Naive thymus-derived CD4-positive, alpha-beta T cell (primary cell): ENCODE measurements at regions of chr21 and their contacts with region 1.

Region 1: GRCh38 chr21:31142600-31142999 is 104.3 kb upstream of the KRTAP19-8 start:
- DNase-seq: peak in 7 of 9 donors; percentile 34 to 64 (median 52)
- ATAC-seq: peak; percentile 90
- H3K4me3 ChIP-seq: no peak overlapping the region
- H3K4me3 Mint-ChIP-seq: peak overlapping the region in 1 of 10 donors; percentile 16
- H3K27ac ChIP-seq: no peak overlapping the region
- H3K27ac Mint-ChIP-seq: peak overlapping the region in 2 of 9 donors; percentile 28 to 41
- H3K4me1 ChIP-seq: peaks cover 0 to 20% of the 10 kb centered on the region in 2 donors
- H3K4me1 Mint-ChIP-seq: peaks cover 8 to 70% (median 50%) of the 10 kb centered on the region in 7 donors
- H3K27me3 ChIP-seq: no peaks in the 10 kb centered on the region
- H3K27me3 Mint-ChIP-seq: no peaks in the 10 kb centered on the region

Region 2: GRCh38 chr21:30831194-30831765 is 311.3 kb before region 1 on chr21:
- CTCF ChIA-PET with region 1: interaction called, 11 read pairs
- POLR2A ChIA-PET with region 1: no interaction called
- intact Hi-C with region 1: no loop called
- DNase-seq: peak in 5 of 9 donors; percentile 13 to 32 (median 32)
- ATAC-seq: no peak
- H3K4me3 ChIP-seq: no peak overlapping the region
- H3K4me3 Mint-ChIP-seq: no peak overlapping the region
- H3K27ac ChIP-seq: no peak overlapping the region
- H3K27ac Mint-ChIP-seq: no peak overlapping the region
- H3K4me1 ChIP-seq: no peaks in the 10 kb centered on the region
- H3K4me1 Mint-ChIP-seq: no peaks in the 10 kb centered on the region
- H3K27me3 ChIP-seq: no peaks in the 10 kb centered on the region
- H3K27me3 Mint-ChIP-seq: peaks cover 3 to 26% (median 10%) of the 10 kb centered on the region in 5 donors

Region 3: DNA sequence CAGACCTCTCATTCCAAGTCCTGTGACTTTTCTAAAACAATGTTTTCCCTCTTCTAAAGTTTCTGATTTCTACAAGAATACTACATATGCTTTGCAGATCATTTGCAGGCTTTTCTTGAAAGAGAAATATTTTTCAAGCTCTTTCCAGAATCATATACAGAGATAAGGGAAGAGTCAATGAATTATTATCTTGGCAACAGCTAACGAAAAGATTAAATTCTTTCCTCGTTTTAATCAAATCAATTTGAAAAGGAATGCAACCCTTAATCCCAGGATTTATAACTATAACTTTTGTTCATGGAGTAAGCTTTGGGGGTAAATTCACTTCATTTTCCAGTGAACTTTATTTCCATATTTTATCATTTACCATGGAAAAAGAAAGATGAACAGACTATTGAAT is 268.1 kb before region 1 on chr21:
- CTCF ChIA-PET with region 1: no interaction called
- POLR2A ChIA-PET with region 1: no interaction called
- intact Hi-C with region 1: no loop called
- DNase-seq: no peak
- ATAC-seq: no peak
- H3K4me3 ChIP-seq: no peak overlapping the region
- H3K4me3 Mint-ChIP-seq: no peak overlapping the region
- H3K27ac ChIP-seq: no peak overlapping the region
- H3K27ac Mint-ChIP-seq: no peak overlapping the region
- H3K4me1 ChIP-seq: no peaks in the 10 kb centered on the region
- H3K4me1 Mint-ChIP-seq: no peaks in the 10 kb centered on the region
- H3K27me3 ChIP-seq: peaks cover 0 to 4% of the 10 kb centered on the region in 2 donors
- H3K27me3 Mint-ChIP-seq: peaks cover 0 to 31% (median 15%) of the 10 kb centered on the region in 5 donors

Region 4: DNA sequence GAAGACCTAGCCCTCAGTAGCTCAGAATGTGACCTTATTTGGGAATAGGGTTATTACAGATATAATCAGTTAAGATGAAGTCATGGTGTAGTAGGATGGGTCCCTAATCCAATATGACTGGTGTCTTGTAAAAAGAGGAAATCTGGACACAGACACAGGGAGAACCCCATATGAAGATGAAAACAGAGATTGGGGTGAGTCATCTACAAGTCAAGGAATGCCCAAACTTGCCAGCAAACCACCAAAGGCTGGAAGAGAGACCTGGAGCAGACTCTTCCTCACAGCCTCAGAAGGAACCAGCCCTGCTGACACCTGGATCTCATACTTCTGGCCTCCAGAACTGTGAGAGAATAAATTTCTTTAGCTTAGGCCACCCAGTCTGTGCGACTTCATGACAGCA is 134.3 kb before region 1 on chr21:
- CTCF ChIA-PET with region 1: no interaction called
- POLR2A ChIA-PET with region 1: no interaction called
- intact Hi-C with region 1: no loop called
- DNase-seq: no peak
- ATAC-seq: no peak
- H3K4me3 ChIP-seq: no peak overlapping the region
- H3K4me3 Mint-ChIP-seq: no peak overlapping the region
- H3K27ac ChIP-seq: no peak overlapping the region
- H3K27ac Mint-ChIP-seq: no peak overlapping the region
- H3K4me1 ChIP-seq: peaks cover 6 to 24% of the 10 kb centered on the region in 2 donors
- H3K4me1 Mint-ChIP-seq: peaks cover 8 to 28% (median 20%) of the 10 kb centered on the region in 7 donors
- H3K27me3 ChIP-seq: no peaks in the 10 kb centered on the region
- H3K27me3 Mint-ChIP-seq: peaks cover 0 to 29% (median 9%) of the 10 kb centered on the region in 5 donors

Region 5: DNA sequence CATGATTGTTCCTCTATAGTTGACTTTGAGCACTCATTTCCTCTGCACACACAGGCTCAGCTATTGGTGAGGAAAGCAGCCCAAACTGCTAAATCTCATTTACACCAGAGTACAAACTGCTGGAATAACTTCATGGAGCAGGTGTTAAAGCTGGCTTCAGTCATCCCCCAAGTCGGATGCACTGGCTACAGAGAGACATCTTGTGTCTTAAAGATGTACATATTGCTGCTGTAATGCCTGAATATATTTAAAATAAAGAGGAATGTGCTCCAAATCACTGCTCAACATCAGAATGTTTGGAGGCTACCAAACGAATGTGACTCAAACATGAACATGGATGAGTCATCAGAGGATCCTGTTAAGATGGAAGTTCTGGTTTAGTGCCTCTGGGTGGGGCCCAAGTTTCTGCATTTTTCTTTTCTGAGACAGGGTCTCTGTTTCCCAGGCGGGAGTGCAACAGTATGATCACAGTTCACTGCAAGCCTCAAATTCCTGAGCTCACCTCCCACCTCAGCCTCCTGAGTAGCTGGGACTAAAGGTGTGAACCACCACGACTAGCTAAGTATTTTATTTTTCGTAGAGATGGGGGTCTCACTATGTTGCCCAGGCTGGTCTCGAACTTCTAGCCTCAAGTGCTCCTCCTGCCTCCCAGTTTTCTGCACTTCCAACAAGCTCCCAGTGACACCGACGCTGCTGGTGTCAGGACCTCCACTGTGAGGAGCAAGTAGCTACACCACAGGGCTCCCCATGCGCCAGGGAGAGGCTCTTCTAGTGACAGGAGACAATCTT is 25.3 kb before region 1 on chr21:
- CTCF ChIA-PET with region 1: interaction called, 7 read pairs
- POLR2A ChIA-PET with region 1: no interaction called
- intact Hi-C with region 1: loop called in 1 of 2 experiments (anchors 2 kb)
- DNase-seq: no peak
- ATAC-seq: peak; percentile 64
- H3K4me3 ChIP-seq: no peak overlapping the region
- H3K4me3 Mint-ChIP-seq: peak overlapping the region in 1 of 10 donors; percentile 3
- H3K27ac ChIP-seq: no peak overlapping the region
- H3K27ac Mint-ChIP-seq: peak overlapping the region in 7 of 9 donors; percentile 20 to 64 (median 56)
- H3K4me1 ChIP-seq: no peaks in the 10 kb centered on the region
- H3K4me1 Mint-ChIP-seq: peaks cover 0 to 29% (median 17%) of the 10 kb centered on the region in 7 donors
- H3K27me3 ChIP-seq: no peaks in the 10 kb centered on the region
- H3K27me3 Mint-ChIP-seq: no peaks in the 10 kb centered on the region

Region 6: DNA sequence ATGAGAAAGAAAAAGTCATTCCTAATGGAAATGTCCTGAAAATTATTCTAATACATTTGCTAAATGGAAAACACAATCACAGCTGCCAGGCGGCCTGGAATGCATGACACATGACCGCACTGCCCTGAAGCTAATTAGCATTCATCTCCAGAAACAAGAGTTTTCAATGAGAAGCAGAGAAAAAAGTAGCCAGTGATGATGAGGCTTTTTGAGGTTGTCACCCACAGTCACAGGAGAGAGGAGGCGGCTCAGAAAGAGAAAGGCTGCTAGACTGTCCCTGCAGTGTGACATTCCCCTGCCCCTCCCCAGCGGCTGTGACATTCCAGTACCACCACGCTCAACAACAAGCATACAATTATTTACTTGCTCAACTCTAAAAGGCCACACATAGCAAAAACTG is 18.6 kb after region 1 on chr21:
- CTCF ChIA-PET with region 1: interaction called, 10 read pairs
- POLR2A ChIA-PET with region 1: interaction called, 9 read pairs
- intact Hi-C with region 1: loop called (anchors 2 kb)
- DNase-seq: peak in 1 of 9 donors; percentile 35
- ATAC-seq: peak; percentile 28
- H3K4me3 ChIP-seq: no peak overlapping the region
- H3K4me3 Mint-ChIP-seq: peak overlapping the region; percentile 14 to 88 (median 77)
- H3K27ac ChIP-seq: peak overlapping the region; percentile 69
- H3K27ac Mint-ChIP-seq: peak overlapping the region; percentile 13 to 99 (median 95)
- H3K4me1 ChIP-seq: peaks cover 0 to 84% of the 10 kb centered on the region in 2 donors
- H3K4me1 Mint-ChIP-seq: peaks cover 52 to 94% (median 92%) of the 10 kb centered on the region in 7 donors
- H3K27me3 ChIP-seq: no peaks in the 10 kb centered on the region
- H3K27me3 Mint-ChIP-seq: no peaks in the 10 kb centered on the region

Region 7: DNA sequence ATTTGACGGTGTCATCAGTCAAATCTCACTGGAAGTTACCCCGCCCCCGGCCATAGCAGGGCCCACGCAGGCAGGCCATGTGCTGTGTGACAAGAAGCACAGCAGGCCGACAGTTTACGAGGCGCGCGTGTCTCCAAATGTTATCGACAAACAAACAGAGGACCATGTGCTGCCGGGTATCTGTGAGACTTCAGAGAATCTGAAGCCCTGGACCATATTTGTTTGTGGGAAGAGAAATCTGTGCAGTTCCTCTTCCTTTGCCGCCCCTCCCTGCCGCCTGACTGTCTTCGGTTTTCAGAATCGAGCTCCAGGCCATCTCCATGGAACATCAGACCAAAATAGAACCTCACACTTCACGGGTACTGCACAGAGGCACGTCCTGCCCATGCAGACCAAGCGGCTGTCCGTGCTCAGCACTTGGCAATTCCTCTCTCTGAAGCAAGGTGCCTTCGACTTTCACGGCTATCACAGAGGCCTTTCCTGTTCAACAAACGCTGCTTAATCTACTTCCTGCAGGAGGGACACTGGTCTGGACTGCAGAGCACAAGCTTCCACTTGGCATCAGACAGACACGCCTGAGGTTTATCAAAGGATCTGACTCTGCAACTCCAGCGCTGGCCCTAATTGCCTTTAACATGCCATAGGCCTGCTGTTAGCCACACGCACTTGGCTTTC is 31.4 kb after region 1 on chr21:
- CTCF ChIA-PET with region 1: interaction called, 19 read pairs
- POLR2A ChIA-PET with region 1: interaction called, 6 read pairs
- intact Hi-C with region 1: loop called in 1 of 2 experiments (anchors 1 kb)
- DNase-seq: peak in 5 of 9 donors; percentile 41 to 64 (median 45)
- ATAC-seq: peak; percentile 69
- H3K4me3 ChIP-seq: peak overlapping the region; percentile 48
- H3K4me3 Mint-ChIP-seq: peak overlapping the region; percentile 79 to 93 (median 86)
- H3K27ac ChIP-seq: peak overlapping the region; percentile 71
- H3K27ac Mint-ChIP-seq: peak overlapping the region; percentile 80 to 98 (median 94)
- H3K4me1 ChIP-seq: peaks cover 7 to 83% of the 10 kb centered on the region in 2 donors
- H3K4me1 Mint-ChIP-seq: peaks cover 56 to 99% (median 84%) of the 10 kb centered on the region in 7 donors
- H3K27me3 ChIP-seq: no peaks in the 10 kb centered on the region
- H3K27me3 Mint-ChIP-seq: no peaks in the 10 kb centered on the region

Region 8: GRCh38 chr21:31580866-31581276 is 438.3 kb after region 1 on chr21:
- CTCF ChIA-PET with region 1: no interaction called
- POLR2A ChIA-PET with region 1: no interaction called
- intact Hi-C with region 1: loop called in 1 of 2 experiments (anchors 1 kb)
- DNase-seq: peak; percentile 50 to 77 (median 66)
- ATAC-seq: peak; percentile 90
- H3K4me3 ChIP-seq: no peak overlapping the region
- H3K4me3 Mint-ChIP-seq: no peak overlapping the region
- H3K27ac ChIP-seq: no peak overlapping the region
- H3K27ac Mint-ChIP-seq: peak overlapping the region in 3 of 9 donors; percentile 10 to 76 (median 32)
- H3K4me1 ChIP-seq: no peaks in the 10 kb centered on the region
- H3K4me1 Mint-ChIP-seq: peaks cover 0 to 8% (median 4%) of the 10 kb centered on the region in 7 donors
- H3K27me3 ChIP-seq: no peaks in the 10 kb centered on the region
- H3K27me3 Mint-ChIP-seq: peaks cover 0 to 25% (median 0%) of the 10 kb centered on the region in 5 donors

Region 9: DNA sequence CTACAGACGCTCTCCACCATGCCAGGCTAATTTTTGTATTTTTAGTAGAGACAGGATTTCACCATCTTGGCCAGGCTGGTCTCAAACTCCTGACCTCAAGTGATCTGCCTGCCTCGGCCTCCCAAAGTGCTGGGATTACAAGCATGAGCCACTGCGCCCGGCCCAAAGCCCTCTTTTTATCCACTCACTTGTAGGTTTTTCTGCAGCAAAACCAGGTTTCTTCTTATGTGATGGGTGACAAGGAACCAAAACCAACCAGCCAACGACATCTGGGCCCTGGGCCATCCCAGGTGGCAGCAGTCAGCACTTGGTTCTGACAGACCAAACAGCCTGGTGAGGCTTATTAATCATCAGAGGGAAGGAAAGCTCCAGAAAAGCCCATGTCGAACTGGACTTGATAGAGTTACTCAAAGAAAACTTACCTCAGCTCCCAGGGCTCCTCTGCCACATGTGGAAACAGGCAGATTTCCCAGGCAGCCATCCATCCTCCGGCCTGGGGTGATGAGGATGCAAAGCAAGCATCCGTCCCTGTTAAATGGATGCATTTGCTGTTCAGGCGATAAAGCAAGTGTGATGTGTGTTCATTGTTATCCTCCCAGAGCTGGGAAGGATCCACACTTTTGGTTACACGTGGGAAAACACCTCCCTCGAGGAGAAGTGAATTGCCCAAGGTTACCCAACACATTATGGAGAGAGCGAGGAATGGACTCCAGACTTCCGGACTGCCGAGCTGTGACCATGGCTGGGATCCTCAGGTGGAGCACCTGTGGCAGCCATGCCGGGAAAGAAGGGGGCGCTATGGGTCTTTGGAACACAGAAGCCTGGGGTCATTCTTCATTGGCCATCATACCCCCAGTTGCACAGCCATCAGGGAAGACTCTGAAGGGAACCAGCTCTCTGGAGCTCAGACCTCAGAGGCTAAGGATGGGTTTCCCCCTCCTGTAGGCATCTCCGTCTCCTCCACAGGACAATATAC is 849.0 kb after region 1 on chr21:
- CTCF ChIA-PET with region 1: no interaction called
- POLR2A ChIA-PET with region 1: no interaction called
- intact Hi-C with region 1: no loop called
- DNase-seq: no peak
- ATAC-seq: no peak
- H3K4me3 ChIP-seq: no peak overlapping the region
- H3K4me3 Mint-ChIP-seq: no peak overlapping the region
- H3K27ac ChIP-seq: no peak overlapping the region
- H3K27ac Mint-ChIP-seq: peak overlapping the region in 1 of 9 donors; percentile 77
- H3K4me1 ChIP-seq: no peaks in the 10 kb centered on the region
- H3K4me1 Mint-ChIP-seq: no peaks in the 10 kb centered on the region
- H3K27me3 ChIP-seq: no peaks in the 10 kb centered on the region
- H3K27me3 Mint-ChIP-seq: peaks cover 0 to 26% (median 20%) of the 10 kb centered on the region in 5 donors